ENCODE measurements at regions of chr16 and their contacts with region 1.

Region 1: DNA sequence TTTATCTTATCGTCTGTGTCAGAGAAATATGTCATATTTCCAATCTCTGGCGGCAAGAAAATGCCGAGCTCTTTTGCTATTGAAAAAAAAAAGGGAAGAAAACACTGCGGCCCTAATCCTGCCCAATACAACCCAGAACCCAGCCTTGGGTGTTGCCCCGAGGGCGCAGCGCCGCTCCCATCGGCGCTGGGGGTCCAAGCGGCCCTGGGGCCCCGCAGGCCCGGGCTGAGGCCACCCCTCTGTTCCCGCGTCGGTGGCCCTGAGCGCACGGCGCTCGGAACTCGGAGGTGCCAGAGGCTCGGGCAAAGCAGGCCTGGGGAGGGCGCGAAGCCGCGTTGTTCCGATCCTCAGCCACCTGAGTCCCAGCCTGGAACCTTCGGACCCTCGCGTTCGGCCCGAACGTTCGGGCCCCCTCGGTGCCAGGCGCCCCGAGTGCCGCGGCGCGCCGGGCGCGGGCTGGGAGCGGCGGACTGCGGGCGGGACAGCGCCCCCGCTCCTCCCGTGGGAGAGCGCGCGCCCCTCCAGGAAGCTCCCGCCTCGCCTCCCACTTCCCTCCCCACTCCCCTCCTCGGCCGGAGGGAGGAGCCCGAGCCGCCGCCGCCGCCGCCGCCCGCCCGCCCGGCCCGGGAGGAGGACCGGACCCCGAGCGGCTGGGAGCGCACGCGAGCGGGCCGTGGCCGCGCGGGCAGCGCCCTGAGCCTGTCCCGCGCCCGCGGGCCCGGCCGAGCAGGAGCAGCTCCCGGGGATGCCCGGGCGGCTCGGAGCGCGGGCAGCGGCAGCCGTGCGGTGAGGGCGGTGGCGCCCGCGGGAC is at the start of gene CPNE2:
- DNase-seq: peak; percentile 41
- H3K4me3 Mint-ChIP-seq: peak within 1 kb of the TSS; percentile 73
- H3K27ac Mint-ChIP-seq: no peak within 1 kb of the TSS
- H3K4me1 Mint-ChIP-seq: peaks cover 10% of the 10 kb centered on the region
- H3K27me3 Mint-ChIP-seq: peaks cover 3% of the 10 kb centered on the region
- total RNA-seq, gene CPNE2: 5.1 TPM

Region 2: GRCh38 chr16:57102888-57103858 is 11.0 kb after region 1 on chr16:
- CTCF ChIA-PET with region 1: interaction called, 17 read pairs
- intact Hi-C with region 1: no loop called
- DNase-seq: no peak
- H3K4me3 Mint-ChIP-seq: no peak overlapping the region
- H3K27ac Mint-ChIP-seq: no peak overlapping the region
- H3K4me1 Mint-ChIP-seq: peaks cover 12% of the 10 kb centered on the region
- H3K27me3 Mint-ChIP-seq: no peaks in the 10 kb centered on the region

Region 3: DNA sequence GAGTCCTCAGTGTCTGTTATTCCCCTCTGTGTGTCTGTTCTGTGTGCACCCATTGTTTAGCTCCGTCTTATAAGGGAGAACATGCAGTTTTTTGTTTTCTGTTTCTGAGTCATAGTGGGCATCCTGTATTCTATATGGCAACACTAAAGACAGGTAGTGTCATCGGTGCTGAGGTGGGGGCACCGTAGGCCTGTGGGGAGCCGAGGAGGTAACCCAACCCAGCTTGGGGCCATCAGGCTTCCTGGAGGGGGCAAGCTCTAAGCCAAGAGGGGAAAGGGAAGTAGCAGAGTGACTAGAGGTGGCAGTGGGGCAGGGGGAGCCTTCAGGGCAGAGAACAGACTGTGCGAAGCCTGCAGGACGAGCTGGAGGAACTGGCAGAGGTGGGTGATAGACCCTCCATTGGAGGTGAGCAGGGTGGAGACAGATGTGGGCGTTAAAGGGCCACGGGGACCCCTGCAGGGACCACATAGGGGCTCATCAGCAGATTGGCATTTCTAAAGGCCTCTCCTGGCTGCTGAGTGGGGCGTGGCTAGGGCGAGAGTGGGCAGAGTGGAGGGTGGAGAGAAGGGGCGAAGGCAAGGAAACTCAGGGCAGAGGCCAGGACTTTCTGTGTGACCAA is 36.7 kb after region 1 on chr16:
- CTCF ChIA-PET with region 1: interaction called, 7 read pairs
- intact Hi-C with region 1: loop called (anchors 2 kb)
- DNase-seq: peak; percentile 85
- H3K4me3 Mint-ChIP-seq: peak overlapping the region; percentile 43
- H3K27ac Mint-ChIP-seq: peak overlapping the region; percentile 87
- H3K4me1 Mint-ChIP-seq: peaks cover 84% of the 10 kb centered on the region
- H3K27me3 Mint-ChIP-seq: no peaks in the 10 kb centered on the region

Region 4: DNA sequence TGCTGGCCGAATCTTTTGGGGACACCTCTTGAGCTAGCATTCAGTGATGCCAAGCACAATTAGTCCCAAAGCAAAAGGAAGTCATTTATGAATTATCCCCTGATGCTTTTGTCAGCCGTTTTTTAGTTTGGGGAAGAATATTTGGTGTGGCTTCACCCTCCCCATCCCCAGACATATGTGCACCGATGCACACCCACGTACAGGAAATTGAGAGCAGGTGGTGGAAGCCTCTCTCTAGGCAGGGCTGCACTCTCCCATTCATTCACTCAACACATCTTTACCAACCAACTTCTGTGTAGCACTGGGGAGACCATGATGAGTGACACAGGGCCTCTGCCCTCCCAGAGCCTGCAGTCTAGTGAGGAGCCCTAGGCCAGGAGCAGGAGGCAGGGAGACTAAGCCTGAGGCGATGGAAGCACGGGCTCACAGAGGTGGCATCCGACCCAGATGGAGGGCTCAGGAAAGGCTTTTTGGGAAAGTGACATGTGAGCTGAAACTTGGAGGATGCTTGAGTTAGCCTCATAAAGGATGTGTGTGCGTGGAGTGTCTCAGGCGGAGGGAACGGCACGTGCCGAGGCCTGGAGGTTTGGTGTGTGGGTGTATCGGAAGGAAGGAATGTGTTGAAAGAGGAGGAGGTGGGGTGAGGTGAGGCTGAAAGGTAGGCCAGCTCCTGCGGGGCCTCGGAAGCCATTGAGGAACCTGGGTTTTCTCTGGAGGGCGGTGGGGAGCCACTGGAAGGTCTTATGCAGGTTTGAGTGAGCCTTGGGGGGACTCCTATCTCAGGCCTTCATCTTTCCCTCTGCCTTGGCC is 49.8 kb after region 1 on chr16:
- CTCF ChIA-PET with region 1: interaction called, 5 read pairs
- intact Hi-C with region 1: loop called (anchors 2 kb)
- DNase-seq: peak; percentile 42
- H3K4me3 Mint-ChIP-seq: peak overlapping the region; percentile 17
- H3K27ac Mint-ChIP-seq: peak overlapping the region; percentile 38
- H3K4me1 Mint-ChIP-seq: peaks cover 42% of the 10 kb centered on the region
- H3K27me3 Mint-ChIP-seq: no peaks in the 10 kb centered on the region

Region 5: GRCh38 chr16:57167953-57168352 is 75.8 kb after region 1 on chr16:
- CTCF ChIA-PET with region 1: interaction called, 8 read pairs
- intact Hi-C with region 1: loop called (anchors 1 kb)
- DNase-seq: no peak
- H3K4me3 Mint-ChIP-seq: no peak overlapping the region
- H3K27ac Mint-ChIP-seq: no peak overlapping the region
- H3K4me1 Mint-ChIP-seq: peaks cover 7% of the 10 kb centered on the region
- H3K27me3 Mint-ChIP-seq: no peaks in the 10 kb centered on the region